ENCODE measurements at regions of chr2 and their contacts with region 1.

Region 1: GRCh38 chr2:50492477-50492851 is 539.5 kb downstream of the NRXN1 start:
- DNase-seq: peak; percentile 54
- ATAC-seq: peak; percentile 88
- H3K4me3 ChIP-seq: no peak overlapping the region
- H3K27ac ChIP-seq: no peak overlapping the region
- H3K4me1 ChIP-seq: no peaks in the 10 kb centered on the region
- H3K27me3 ChIP-seq: no peaks in the 10 kb centered on the region
- CTCF ChIP-seq: peak; percentile 72
- EP300 ChIP-seq: no peak
- POLR2A ChIP-seq: no peak
- RAD21 ChIP-seq: no peak

Region 2: DNA sequence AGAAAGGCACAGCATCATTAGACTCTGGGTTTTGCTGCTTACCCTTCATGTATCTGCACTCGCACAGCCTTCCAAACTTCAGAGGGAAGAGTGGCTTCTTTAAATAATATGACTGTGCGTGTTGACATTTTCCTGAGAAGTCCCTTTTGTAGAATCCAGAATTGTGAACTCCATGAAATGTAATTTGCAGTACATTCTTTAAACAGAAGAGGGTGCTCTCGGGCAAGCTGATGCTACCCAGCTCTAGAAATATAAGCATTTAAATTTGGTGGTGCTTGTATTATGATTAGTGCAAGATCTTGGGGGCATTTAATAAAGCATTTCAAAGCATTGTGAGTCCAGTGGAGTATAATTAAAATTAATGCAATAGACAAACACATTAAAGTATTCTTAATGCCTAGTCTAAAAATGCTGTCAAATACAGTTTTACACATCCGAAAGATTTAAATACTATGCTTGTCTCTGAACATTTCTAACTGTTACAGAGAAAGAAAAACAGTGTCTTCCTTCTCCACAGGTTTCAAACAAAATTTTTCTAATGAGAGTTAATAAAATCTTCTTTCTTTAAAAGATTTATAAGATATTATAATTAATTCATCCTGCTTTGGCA is 1892.2 kb before region 1 on chr2:
- CTCF ChIA-PET with region 1: no interaction called
- POLR2A ChIA-PET with region 1: no interaction called
- in situ Hi-C with region 1: no loop called
- intact Hi-C with region 1: loop called (anchors 5 kb)
- DNase-seq: peak; percentile 42
- ATAC-seq: peak; percentile 50
- H3K4me3 ChIP-seq: no peak overlapping the region
- H3K27ac ChIP-seq: no peak overlapping the region
- H3K4me1 ChIP-seq: no peaks in the 10 kb centered on the region
- H3K27me3 ChIP-seq: no peaks in the 10 kb centered on the region
- CTCF ChIP-seq: peak; percentile 69
- EP300 ChIP-seq: no peak
- POLR2A ChIP-seq: no peak
- RAD21 ChIP-seq: no peak; the same call in 1 of the 2 replicates

Region 3: DNA sequence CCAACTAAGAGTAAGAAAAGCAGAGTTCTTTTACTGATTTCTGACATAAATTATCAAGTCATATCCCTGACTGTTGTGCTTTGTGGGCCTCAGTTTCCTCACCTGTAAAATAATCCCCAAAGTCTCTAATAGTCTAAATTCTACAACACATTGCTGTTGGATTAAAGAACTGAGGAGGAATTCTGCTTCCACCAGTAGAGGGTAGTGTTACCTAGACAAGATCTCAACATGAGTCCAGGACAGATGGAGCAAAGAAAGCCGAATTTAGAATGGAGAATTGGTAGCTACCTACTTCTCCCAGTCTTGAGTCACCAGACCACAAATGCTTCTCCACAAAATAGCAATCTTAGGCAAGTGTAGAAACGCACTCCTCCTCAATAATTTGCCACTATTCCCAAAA is 875.7 kb before region 1 on chr2:
- CTCF ChIA-PET with region 1: no interaction called
- POLR2A ChIA-PET with region 1: no interaction called
- in situ Hi-C with region 1: no loop called
- intact Hi-C with region 1: loop called (anchors 2 kb)
- DNase-seq: peak; percentile 30
- ATAC-seq: peak; percentile 86
- H3K4me3 ChIP-seq: no peak overlapping the region
- H3K27ac ChIP-seq: no peak overlapping the region
- H3K4me1 ChIP-seq: 0 out of 2 replicates have a peak, but pooled peaks cover 2% of the 10 kb centered on the region
- H3K27me3 ChIP-seq: no peaks in the 10 kb centered on the region
- CTCF ChIP-seq: peak; percentile 65
- EP300 ChIP-seq: no peak
- POLR2A ChIP-seq: no peak
- RAD21 ChIP-seq: no peak

Region 4: DNA sequence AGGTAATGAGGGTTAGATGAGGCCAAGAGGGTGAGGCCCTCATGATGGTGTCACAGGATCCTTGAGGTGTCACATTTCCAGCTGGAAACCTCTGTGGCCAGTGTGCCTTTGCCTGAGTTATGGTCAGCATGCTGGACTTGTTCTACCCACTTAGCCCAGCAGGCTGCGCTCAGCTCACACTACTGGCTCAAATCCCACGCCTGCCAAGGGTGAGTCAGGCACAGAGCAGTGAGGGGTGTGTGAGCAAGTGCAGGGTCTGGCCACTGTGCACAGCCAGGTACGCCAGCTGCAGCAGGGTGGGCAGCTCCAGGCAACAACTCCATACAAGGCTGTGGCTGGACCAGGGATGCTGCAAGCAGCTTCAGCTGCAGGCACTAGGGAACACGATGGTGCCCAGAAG is 721.5 kb before region 1 on chr2:
- CTCF ChIA-PET with region 1: no interaction called
- POLR2A ChIA-PET with region 1: no interaction called
- in situ Hi-C with region 1: no loop called
- intact Hi-C with region 1: loop called (anchors 1 kb)
- DNase-seq: peak; percentile 53
- ATAC-seq: peak; percentile 100
- H3K4me3 ChIP-seq: no peak overlapping the region
- H3K27ac ChIP-seq: no peak overlapping the region
- H3K4me1 ChIP-seq: no peaks in the 10 kb centered on the region
- H3K27me3 ChIP-seq: no peaks in the 10 kb centered on the region
- CTCF ChIP-seq: peak; percentile 94
- EP300 ChIP-seq: no peak
- POLR2A ChIP-seq: no peak
- RAD21 ChIP-seq: peak; percentile 86

Region 5: DNA sequence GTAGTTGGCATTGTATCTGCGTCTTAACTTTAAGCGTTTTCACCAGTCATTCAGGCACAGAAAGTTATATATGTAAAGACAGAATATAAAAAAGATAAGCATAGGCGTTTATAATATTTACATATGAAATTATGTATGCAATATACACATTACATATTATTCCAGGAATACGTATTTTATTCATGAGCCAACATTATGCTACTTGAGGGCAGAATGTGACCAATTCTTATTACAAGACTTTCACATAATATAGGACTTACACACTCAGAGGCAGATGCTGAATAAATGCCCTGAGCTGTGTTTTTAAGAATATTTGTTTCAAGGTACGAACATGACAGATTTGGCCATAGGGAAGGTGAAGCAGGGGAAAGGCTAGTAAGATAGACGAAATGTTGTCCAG is 335.2 kb before region 1 on chr2:
- CTCF ChIA-PET with region 1: no interaction called
- POLR2A ChIA-PET with region 1: no interaction called
- in situ Hi-C with region 1: no loop called
- intact Hi-C with region 1: no loop called
- DNase-seq: no peak
- ATAC-seq: no peak
- H3K4me3 ChIP-seq: no peak overlapping the region
- H3K27ac ChIP-seq: no peak overlapping the region
- H3K4me1 ChIP-seq: no peaks in the 10 kb centered on the region
- H3K27me3 ChIP-seq: no peaks in the 10 kb centered on the region
- CTCF ChIP-seq: no peak
- EP300 ChIP-seq: no peak
- POLR2A ChIP-seq: no peak
- RAD21 ChIP-seq: no peak

Region 6: GRCh38 chr2:50443868-50444665 is 48.4 kb before region 1 on chr2:
- CTCF ChIA-PET with region 1: no interaction called
- POLR2A ChIA-PET with region 1: no interaction called
- in situ Hi-C with region 1: no loop called
- intact Hi-C with region 1: no loop called
- DNase-seq: no peak
- ATAC-seq: no peak
- H3K4me3 ChIP-seq: no peak overlapping the region
- H3K27ac ChIP-seq: no peak overlapping the region
- H3K4me1 ChIP-seq: no peaks in the 10 kb centered on the region
- H3K27me3 ChIP-seq: no peaks in the 10 kb centered on the region
- CTCF ChIP-seq: no peak
- EP300 ChIP-seq: no peak
- POLR2A ChIP-seq: no peak
- RAD21 ChIP-seq: no peak

Region 7: GRCh38 chr2:50535971-50536759 is 43.7 kb after region 1 on chr2:
- CTCF ChIA-PET with region 1: no interaction called
- POLR2A ChIA-PET with region 1: no interaction called
- in situ Hi-C with region 1: no loop called
- intact Hi-C with region 1: no loop called
- DNase-seq: peak; percentile 6
- ATAC-seq: peak; percentile 66
- H3K4me3 ChIP-seq: no peak overlapping the region
- H3K27ac ChIP-seq: no peak overlapping the region
- H3K4me1 ChIP-seq: no peaks in the 10 kb centered on the region
- H3K27me3 ChIP-seq: no peaks in the 10 kb centered on the region
- CTCF ChIP-seq: peak; percentile 46
- EP300 ChIP-seq: no peak
- POLR2A ChIP-seq: no peak
- RAD21 ChIP-seq: no peak